ENCODE measurements at regions of chr11 and their contacts with region 1.

Region 1: DNA sequence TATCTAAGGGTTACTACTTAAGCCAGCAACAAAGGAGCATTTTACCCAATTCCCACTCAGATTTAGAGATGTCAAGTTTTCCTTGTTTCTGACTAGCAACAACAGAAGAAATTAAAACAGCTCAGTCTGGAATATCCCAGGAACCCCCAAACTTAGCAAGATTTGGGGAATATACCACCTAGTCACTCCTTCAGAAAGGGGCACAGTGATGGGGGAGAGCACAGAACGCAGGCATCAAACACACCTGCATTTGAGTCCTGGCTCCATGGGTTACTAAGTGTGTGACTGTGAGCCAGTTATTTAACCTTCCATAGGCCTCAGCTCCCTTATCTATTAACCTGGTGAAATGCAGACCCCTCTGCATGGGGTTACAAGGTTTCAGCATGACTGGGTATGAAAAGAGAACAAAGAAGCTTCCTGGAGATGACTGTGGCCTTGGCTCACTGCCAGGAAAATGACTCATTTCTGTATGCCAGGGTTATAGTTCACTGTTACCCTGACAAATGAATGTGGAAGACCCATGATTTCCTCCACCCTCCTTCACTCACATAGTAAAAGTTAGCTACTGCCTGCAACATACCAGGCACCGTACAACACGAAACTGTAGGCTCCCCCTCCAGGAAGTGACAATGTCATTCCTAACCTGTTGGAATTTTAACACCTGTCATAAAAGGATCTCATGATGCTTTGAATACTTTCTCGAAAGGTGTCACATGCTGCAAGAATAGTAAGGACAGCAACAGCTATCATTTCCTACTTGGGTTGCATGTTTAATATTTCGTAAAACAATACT is 79.6 kb downstream of the ME3 start:
- DNase-seq: peak; percentile 94
- H3K4me3 Mint-ChIP-seq: no peak overlapping the region
- H3K27ac Mint-ChIP-seq: peak overlapping the region; percentile 66
- H3K4me1 Mint-ChIP-seq: peaks cover 51% of the 10 kb centered on the region
- H3K27me3 Mint-ChIP-seq: peaks cover 4% of the 10 kb centered on the region

Region 2: DNA sequence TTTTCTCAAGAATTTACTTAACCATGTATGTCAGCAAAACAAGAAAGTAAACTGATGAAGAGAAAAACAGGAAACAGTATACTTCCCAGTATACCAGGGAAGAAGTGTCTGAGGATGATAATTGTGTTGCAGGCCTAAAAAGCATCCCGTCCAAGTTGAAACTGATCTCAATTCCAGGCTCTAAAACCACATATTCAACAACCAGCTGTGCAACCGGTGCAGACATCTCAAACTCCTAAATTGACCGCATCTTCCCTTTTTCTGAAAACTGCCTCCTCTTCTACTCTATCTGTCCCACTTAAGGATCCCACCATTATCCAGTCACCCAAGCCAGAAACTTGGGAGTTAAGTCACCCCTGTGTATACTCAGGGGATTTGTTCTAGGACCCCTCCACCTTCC is 690.5 kb before region 1 on chr11:
- CTCF ChIA-PET with region 1: no interaction called
- POLR2A ChIA-PET with region 1: no interaction called
- intact Hi-C with region 1: no loop called
- DNase-seq: no peak
- H3K4me3 Mint-ChIP-seq: no peak overlapping the region
- H3K27ac Mint-ChIP-seq: no peak overlapping the region
- H3K4me1 Mint-ChIP-seq: no peaks in the 10 kb centered on the region
- H3K27me3 Mint-ChIP-seq: no peaks in the 10 kb centered on the region

Region 3: DNA sequence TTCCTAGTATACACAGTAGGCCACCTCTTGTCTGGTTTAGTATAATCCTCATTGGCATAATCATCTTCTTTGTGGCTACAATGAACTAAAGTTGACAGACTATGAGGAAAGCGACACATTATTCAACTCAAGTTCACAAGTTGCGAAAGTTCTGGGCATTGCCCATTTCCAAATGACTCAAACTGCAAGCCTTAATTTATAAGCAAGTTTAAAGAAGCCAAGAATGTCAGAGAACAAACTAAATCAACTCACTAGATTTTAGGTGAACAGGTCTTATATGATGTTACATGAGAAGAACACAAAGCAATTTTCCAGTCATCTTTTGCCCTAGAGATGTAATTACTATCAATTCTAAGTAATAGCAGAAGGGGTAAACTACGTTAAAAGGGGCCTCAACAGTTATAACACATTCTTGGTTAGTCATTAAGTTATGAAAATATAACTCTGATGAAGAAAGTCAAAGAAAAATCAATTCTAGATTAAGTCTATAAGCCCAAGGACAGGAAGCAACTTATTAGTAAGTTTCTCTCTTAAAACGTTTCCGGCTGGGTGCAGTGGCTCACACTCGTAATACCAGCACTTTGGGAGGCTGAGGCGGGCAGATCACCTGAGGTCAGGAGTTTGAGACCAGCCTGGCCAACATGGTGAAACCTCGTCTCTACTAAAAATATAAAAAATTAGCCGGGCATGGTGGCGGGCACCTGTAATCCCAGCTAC is 545.4 kb before region 1 on chr11:
- CTCF ChIA-PET with region 1: no interaction called
- POLR2A ChIA-PET with region 1: no interaction called
- intact Hi-C with region 1: loop called (anchors 1 kb)
- DNase-seq: peak; percentile 81
- H3K4me3 Mint-ChIP-seq: peak overlapping the region; percentile 60
- H3K27ac Mint-ChIP-seq: peak overlapping the region; percentile 99
- H3K4me1 Mint-ChIP-seq: peaks cover 93% of the 10 kb centered on the region
- H3K27me3 Mint-ChIP-seq: no peaks in the 10 kb centered on the region

Region 4: GRCh38 chr11:86511086-86511551 is 81.7 kb before region 1 on chr11:
- CTCF ChIA-PET with region 1: no interaction called
- POLR2A ChIA-PET with region 1: no interaction called
- intact Hi-C with region 1: loop called (anchors 1 kb)
- DNase-seq: no peak
- H3K4me3 Mint-ChIP-seq: no peak overlapping the region
- H3K27ac Mint-ChIP-seq: no peak overlapping the region
- H3K4me1 Mint-ChIP-seq: no peaks in the 10 kb centered on the region
- H3K27me3 Mint-ChIP-seq: no peaks in the 10 kb centered on the region

Region 5: DNA sequence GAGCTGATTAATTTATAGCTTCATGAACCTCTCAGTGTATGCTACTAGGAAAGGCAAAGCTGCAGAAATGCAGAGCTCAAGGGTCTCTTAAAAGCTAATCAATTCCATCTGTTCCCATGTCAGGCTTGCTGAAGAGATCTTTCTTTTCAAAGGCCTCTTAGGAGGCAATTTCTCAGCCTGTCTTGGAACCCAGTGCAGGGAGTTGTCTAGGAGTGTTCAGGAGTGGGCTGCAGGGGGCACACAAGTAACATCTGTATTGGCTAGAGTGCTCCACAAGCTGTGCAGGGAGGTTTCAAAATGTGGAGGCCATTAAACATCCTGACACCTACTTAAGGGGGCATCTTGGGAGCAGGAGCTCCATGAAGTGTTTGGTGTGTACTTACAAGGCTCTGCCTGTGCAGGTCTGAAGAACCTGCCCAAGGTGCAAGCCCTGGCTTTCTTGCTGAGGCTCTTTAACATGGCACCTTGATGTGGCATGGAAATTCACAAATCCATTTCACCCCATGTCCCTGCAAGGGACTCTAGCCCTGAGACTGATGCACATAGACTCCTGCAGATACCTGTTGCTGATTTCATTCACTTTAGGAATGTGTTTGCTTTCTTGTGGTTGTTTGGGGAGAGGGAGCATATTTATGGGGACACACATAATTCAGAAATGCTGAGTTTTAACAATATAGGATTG is 55.2 kb before region 1 on chr11:
- CTCF ChIA-PET with region 1: no interaction called
- POLR2A ChIA-PET with region 1: no interaction called
- intact Hi-C with region 1: no loop called
- DNase-seq: no peak
- H3K4me3 Mint-ChIP-seq: no peak overlapping the region
- H3K27ac Mint-ChIP-seq: no peak overlapping the region
- H3K4me1 Mint-ChIP-seq: no peaks in the 10 kb centered on the region
- H3K27me3 Mint-ChIP-seq: peaks cover 2% of the 10 kb centered on the region

Region 6: GRCh38 chr11:86608251-86608799 is 15.5 kb after region 1 on chr11:
- CTCF ChIA-PET with region 1: interaction called, 49 read pairs
- POLR2A ChIA-PET with region 1: no interaction called
- intact Hi-C with region 1: no loop called
- DNase-seq: peak; percentile 59
- H3K4me3 Mint-ChIP-seq: no peak overlapping the region
- H3K27ac Mint-ChIP-seq: no peak overlapping the region
- H3K4me1 Mint-ChIP-seq: peaks cover 10% of the 10 kb centered on the region
- H3K27me3 Mint-ChIP-seq: peaks cover 2% of the 10 kb centered on the region

Region 7: DNA sequence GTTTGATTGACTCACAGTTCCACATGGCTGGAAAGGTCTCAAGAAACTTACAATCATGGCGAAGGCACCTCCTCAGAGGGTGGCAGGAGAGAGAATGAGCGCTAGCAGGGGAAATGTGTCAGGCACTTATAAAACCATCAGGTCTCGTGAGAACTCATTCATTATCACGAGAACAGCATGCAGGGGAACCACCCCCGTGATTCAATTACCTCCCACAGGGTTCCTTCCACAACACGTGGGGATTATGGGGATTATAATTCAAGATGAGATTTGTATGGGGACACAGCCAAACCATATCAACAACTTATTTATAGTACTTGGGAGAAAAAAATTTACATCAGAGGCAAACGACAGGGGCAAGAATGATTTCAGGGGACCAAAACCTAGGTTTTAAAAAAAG is 76.6 kb after region 1 on chr11:
- CTCF ChIA-PET with region 1: no interaction called
- POLR2A ChIA-PET with region 1: no interaction called
- intact Hi-C with region 1: no loop called
- DNase-seq: no peak
- H3K4me3 Mint-ChIP-seq: no peak overlapping the region
- H3K27ac Mint-ChIP-seq: no peak overlapping the region
- H3K4me1 Mint-ChIP-seq: peaks cover 8% of the 10 kb centered on the region
- H3K27me3 Mint-ChIP-seq: peaks cover 30% of the 10 kb centered on the region

Region 8: GRCh38 chr11:86740709-86741483 is 148.0 kb after region 1 on chr11:
- CTCF ChIA-PET with region 1: no interaction called
- POLR2A ChIA-PET with region 1: no interaction called
- intact Hi-C with region 1: loop called (anchors 1 kb)
- DNase-seq: peak; percentile 55
- H3K4me3 Mint-ChIP-seq: no peak overlapping the region
- H3K27ac Mint-ChIP-seq: no peak overlapping the region
- H3K4me1 Mint-ChIP-seq: peaks cover 19% of the 10 kb centered on the region
- H3K27me3 Mint-ChIP-seq: peaks cover 4% of the 10 kb centered on the region

Region 9: DNA sequence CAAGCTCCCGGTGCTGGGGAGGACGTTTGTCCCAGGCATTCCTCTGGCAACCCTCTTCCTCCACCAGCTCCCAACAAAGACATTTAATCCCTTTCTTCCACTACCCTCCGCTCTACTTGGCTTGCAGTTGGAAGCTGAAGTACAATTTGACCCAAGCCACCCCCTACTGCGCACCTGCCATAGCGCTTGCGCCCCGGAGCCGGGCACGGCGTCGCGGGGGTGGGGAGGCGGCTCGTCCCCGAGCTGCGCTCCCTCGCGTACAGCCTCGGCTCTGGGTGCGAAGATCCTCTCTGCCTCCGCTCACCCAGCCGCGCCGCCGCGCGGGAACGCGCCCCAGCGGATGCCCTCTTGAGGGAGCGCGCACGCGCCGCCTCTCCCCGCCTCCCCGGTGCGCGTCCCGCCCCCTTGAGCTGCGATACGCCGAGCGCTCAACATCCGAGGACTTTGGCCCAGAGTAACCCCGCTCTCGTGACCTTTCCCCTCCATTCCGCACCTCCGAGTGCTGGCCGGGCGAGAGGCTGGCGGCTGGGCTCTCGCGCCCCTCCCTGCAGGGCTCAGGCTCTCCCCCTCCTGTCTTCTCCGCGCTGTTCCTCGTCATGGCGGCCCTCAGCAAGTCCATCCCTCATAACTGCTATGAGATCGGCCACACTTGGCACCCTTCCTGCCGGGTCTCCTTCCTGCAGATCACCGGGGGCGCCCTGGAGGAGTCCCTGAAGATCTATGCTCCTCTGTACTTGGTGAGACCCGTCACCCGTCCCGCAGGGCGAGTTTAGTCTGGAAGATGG is 444.8 kb after region 1 on chr11 and contains the start of gene TMEM135:
- CTCF ChIA-PET with region 1: no interaction called
- POLR2A ChIA-PET with region 1: no interaction called
- intact Hi-C with region 1: loop called (anchors 5 kb)
- DNase-seq: peak; percentile 97
- H3K4me3 Mint-ChIP-seq: peak within 1 kb of the TSS; percentile 91
- H3K27ac Mint-ChIP-seq: peak within 1 kb of the TSS; percentile 87
- H3K4me1 Mint-ChIP-seq: peaks cover 32% of the 10 kb centered on the region
- H3K27me3 Mint-ChIP-seq: no peaks in the 10 kb centered on the region
- total RNA-seq, gene TMEM135: 16.7 to 27.5 TPM

Measured in activated CD4-positive, alpha-beta memory T cell treated with anti-CD3 and anti-CD28 coated beads for 36 hours (primary cell).